ENCODE measurements at regions of chr20 and their contacts with region 1.

Region 1: DNA sequence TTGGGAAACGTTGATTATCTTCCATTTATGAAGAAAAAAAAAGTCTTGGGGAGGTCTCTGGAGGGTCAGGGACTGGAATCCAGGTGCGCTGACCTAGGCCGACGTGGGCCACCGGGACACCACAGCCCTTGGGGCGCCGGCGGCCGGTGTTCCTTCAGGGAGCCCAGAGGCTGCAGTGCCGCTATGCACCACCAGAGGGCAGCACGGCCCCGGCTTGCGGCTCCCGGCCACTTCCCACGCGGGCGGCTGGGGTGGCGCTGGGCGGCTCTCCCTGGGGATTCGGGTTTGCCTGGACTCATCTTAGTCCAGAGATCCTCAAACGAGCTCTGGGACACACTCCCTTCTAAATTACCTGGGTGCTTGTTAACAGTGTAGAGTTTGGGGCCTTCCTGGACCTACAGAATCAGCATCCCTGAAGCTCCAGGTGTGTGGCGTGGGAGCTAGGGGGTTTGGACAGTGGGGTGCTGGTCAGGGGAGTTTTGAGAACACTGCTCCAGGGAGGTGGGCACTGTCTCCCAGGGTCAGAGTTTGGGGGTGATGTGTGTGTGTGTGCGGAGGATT is 23.0 kb upstream of the GTSF1L start:
- DNase-seq: peak; percentile 75
- H3K4me3 Mint-ChIP-seq: no peak overlapping the region
- H3K27ac Mint-ChIP-seq: peak overlapping the region; percentile 87
- H3K4me1 Mint-ChIP-seq: peaks cover 43% of the 10 kb centered on the region
- H3K27me3 Mint-ChIP-seq: no peaks in the 10 kb centered on the region

Region 2: DNA sequence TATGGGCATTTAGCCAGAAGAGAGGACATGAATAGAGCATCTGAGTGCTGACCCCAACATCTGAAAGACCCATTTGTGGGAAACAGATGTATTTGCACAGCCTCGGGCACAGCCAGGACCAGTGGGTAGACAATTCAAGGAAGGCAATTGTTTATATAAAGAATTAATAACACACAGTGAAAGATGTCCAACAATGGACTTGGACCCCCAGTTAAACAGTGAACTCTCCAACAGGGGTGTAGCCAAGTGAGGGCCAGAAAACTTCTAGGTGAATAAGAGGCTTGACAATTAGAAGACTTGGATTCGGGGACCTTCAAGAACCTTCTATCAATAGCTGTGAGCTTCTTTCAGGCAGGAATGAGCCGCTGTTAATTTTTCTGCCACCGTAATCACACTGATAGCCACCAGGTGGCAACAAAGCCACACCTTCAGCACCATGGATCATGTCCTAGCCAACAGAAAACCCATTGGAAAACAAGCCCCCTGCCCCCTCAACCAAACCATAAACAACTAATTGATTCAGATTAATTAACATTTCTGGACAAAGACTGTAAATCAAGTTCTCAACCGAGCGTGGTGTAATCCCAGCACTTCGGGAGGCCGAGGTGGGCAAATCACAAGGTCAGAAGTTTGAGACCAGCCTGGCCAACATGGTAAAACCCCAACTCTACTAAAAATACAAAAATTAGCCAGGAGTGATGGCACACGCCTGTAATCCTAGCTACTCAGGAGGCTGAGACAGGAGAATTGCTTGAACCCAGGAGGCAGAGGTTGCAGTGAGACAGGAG is 300.9 kb before region 1 on chr20:
- intact Hi-C with region 1: loop called (anchors 2 kb)
- DNase-seq: peak; percentile 20
- H3K4me3 Mint-ChIP-seq: no peak overlapping the region
- H3K27ac Mint-ChIP-seq: no peak overlapping the region
- H3K4me1 Mint-ChIP-seq: peaks cover 3% of the 10 kb centered on the region
- H3K27me3 Mint-ChIP-seq: peaks cover 29% of the 10 kb centered on the region

Region 3: DNA sequence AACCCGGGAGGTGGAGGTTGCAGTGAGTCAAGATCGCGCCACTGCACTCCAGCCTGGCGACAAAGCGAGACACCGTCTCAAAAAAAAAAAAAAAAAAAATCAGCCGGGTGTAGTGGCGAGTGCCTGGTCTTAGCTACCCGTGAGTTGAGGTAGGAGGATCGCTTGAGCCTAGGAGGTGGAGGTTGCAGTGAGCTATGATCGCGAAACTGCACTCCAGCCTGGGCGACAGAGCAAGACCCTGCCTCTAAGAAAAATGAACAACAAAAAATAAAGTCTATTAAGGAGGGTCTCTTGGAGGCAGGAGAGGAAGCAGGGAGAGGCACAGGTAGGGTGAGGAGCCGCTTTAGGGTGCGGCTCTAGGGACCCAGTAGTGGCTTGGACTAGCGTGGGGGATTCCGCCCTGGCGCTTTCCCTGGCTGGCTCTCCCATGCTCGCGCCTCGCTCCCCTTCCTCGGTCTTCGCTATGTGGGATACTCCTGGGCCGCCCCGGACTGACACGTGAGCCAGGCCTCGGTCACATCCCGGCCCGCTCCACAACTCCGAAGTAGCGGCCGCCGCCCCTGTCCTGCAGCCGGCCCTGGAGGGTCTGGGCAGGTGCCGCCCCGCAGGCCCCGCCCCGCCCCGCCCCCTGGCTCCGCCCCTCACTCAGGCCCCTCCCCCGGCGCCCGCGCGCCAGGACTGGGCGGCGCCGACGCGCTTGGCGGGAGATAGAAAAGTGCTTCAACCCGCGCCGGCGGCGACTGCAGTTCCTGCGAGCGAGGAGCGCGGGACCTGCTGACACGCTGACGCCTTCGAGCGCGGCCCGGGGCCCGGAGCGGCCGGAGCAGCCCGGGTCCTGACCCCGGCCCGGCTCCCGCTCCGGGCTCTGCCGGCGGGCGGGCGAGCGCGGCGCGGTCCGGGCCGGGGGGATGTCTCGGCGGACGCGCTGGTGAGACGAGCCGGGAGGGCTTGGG is 83.2 kb before region 1 on chr20 and contains the start of gene MYBL2:
- intact Hi-C with region 1: loop called (anchors 1 kb)
- DNase-seq: peak; percentile 71
- H3K4me3 Mint-ChIP-seq: peak within 1 kb of the TSS; percentile 82
- H3K27ac Mint-ChIP-seq: peak within 1 kb of the TSS; percentile 48
- H3K4me1 Mint-ChIP-seq: peaks cover 23% of the 10 kb centered on the region
- H3K27me3 Mint-ChIP-seq: peaks cover 14% of the 10 kb centered on the region
- total RNA-seq, gene MYBL2: 95.1 and 95.5 TPM in 2 replicates

Region 4: DNA sequence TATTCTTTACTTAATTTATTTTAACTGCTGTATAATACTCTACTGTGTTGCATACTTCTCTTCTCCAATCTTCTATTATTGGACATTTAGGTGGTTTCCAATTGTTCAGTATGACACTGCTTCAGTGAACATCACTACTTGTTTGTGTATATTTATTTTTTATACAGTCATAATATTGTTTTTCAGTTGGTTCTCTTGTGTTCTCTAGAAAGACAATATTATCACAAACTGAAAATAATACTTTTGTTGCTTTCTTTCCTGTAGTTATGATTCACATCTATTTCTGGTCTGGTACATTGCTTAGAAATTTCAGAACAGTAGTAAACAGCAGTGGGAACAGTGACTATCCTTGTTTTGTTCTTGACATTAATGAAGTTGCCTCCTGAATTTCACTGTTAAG is 39.8 kb after region 1 on chr20:
- intact Hi-C with region 1: loop called (anchors 1 kb)
- DNase-seq: no peak
- H3K4me3 Mint-ChIP-seq: no peak overlapping the region
- H3K27ac Mint-ChIP-seq: peak overlapping the region; percentile 44
- H3K4me1 Mint-ChIP-seq: peaks cover 10% of the 10 kb centered on the region
- H3K27me3 Mint-ChIP-seq: peaks cover 2% of the 10 kb centered on the region

Region 5: DNA sequence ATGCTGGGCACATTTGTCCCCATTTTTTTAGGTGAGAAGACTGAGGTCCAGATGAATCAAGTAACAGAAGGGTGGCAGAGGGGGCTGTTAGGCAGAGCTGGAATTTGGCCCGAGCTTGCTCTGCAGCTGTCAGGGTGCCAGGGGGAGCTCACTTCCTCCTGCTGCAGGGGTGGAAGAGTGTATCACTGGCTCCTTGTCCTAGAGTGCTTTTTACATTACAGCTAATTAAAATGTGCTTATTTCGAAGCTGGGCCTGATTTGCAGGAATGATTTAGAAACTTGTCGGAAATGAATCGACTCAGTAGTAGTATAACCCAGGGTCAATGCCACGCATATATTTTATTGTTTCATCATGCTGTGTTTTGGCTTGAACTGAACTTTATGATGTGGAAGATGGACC is 176.0 kb after region 1 on chr20:
- intact Hi-C with region 1: loop called (anchors 2 kb)
- DNase-seq: no peak
- H3K4me3 Mint-ChIP-seq: peak overlapping the region; percentile 56
- H3K27ac Mint-ChIP-seq: peak overlapping the region; percentile 70
- H3K4me1 Mint-ChIP-seq: peaks cover 61% of the 10 kb centered on the region
- H3K27me3 Mint-ChIP-seq: peaks cover 21% of the 10 kb centered on the region

Region 6: GRCh38 chr20:43955062-43955749 is 205.4 kb after region 1 on chr20:
- intact Hi-C with region 1: loop called (anchors 1 kb)
- DNase-seq: peak; percentile 35
- H3K4me3 Mint-ChIP-seq: peak overlapping the region; percentile 53
- H3K27ac Mint-ChIP-seq: peak overlapping the region; percentile 77
- H3K4me1 Mint-ChIP-seq: peaks cover 82% of the 10 kb centered on the region
- H3K27me3 Mint-ChIP-seq: peaks cover 7% of the 10 kb centered on the region

Region 7: GRCh38 chr20:44196271-44196670 is 446.5 kb after region 1 on chr20:
- intact Hi-C with region 1: loop called (anchors 2 kb)
- DNase-seq: no peak
- H3K4me3 Mint-ChIP-seq: no peak overlapping the region
- H3K27ac Mint-ChIP-seq: no peak overlapping the region
- H3K4me1 Mint-ChIP-seq: peaks cover 17% of the 10 kb centered on the region
- H3K27me3 Mint-ChIP-seq: no peaks in the 10 kb centered on the region

Region 8: GRCh38 chr20:45649312-45649863 is 1899.6 kb after region 1 on chr20:
- intact Hi-C with region 1: no loop called
- DNase-seq: no peak
- H3K4me3 Mint-ChIP-seq: no peak overlapping the region
- H3K27ac Mint-ChIP-seq: no peak overlapping the region
- H3K4me1 Mint-ChIP-seq: no peaks in the 10 kb centered on the region
- H3K27me3 Mint-ChIP-seq: peaks cover 2% of the 10 kb centered on the region

Measured in activated T-helper 1 cell treated with anti-CD3 and anti-CD28 coated beads, Interleukin-12 subunit alpha, Interleukin-12 subunit beta, Interleukin-2, Interleukin-4 antibody, amounts not matched to agents 30 ng/mL and 10 ng/mL and 1 ng/mL, durations not matched to agents 14 hours and 24 hours and 36 hours (primary cell).